ENCODE measurements at regions of chrX and their contacts with region 1.

Region 1: DNA sequence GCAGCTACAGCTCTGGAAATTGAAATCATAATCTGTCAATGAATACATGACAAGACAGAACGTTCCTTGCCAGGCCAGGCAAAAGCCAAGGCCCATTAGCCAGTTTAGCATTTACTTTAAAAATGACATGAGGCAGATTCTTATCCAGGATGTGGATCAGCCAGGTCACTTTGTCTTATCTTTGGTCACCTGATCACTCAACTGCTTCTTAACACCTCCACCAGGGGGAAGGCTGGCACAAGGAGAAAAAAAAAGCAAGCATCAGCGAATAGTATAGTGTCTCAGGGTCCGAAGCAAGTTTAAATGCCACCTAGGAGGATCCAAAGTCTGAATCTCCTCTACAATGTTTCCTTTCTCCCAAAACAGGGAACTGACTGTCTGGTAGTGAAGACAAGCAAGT is 18.8 kb downstream of the ATP1B4 start:
- DNase-seq: peak; percentile 28
- H3K4me3 ChIP-seq: no peak overlapping the region
- H3K27ac ChIP-seq: no peak overlapping the region
- H3K4me1 ChIP-seq: no peaks in the 10 kb centered on the region
- H3K27me3 ChIP-seq: no peaks in the 10 kb centered on the region
- CTCF ChIP-seq: peak; percentile 46 to 73

Region 2: DNA sequence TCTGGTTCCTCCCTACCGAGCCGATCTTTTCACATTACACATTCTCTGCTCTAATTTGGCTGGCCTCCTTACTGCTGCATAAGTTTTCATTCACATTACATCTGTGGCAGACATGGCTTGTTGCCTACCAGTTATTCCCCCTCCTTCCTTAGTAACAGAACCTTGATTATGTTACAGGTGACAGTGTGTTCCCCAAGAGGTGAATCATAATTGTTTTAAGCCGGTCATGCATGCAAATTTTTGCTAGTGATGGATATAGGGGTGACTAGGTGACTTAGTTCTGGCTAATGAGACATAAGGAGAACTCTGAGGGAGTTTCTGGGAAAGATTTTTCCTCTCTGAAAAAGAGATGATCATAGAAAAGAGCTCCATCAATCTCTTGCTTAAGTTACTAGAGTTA is 96.8 kb after region 1 on chrX:
- CTCF ChIA-PET with region 1: no interaction called
- dilution Hi-C with region 1: no loop called
- in situ Hi-C with region 1: no loop called
- intact Hi-C with region 1: loop called (anchors 1 kb)
- DNase-seq: peak; percentile 39
- H3K4me3 ChIP-seq: no peak overlapping the region
- H3K27ac ChIP-seq: no peak overlapping the region
- H3K4me1 ChIP-seq: no peaks in the 10 kb centered on the region
- H3K27me3 ChIP-seq: peaks cover 3% of the 10 kb centered on the region
- CTCF ChIP-seq: no peak

Region 3: DNA sequence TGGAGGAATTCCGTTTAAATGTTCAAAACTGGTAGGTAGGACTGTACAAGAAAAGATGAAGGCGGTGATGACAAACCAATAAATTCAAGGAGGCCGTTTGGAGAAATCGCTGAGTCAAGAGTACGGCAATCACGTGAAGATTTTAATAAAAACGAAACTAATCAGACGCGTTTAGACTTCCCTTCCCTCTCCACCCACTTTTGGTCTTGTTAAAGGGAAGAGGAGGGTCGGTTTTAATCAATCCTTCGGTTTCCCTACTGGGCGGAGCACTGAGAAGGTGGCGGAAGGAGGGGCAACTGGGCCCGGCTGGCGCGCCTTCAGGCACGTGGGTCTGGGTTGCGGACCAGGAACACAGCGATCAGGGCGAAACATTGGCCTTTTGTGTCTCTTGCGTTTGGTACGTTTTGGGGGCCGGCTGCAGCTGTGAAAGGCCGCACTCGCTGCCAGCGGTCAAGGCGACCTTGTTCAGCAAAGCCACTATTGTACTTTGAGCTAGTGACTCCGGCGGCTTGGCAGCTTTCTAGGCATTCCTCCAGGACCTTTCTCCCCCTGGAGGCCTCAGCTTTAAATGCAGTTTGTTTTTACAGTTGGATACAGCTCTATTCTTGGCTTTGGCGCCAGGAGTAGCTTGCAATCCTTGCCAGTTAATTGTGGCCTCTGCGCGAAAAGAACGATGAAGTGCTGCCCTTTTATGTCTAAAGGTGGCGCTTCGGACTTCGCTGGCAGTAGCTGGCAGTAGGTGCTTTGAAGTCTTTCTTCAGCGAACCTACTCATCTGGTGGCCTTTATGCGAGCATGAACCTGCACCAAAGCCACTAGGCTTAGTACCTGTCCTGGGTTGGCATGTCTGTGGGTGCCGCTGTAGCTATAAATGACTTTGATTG is 105.2 kb after region 1 on chrX:
- CTCF ChIA-PET with region 1: interaction called, 4 read pairs
- dilution Hi-C with region 1: no loop called
- in situ Hi-C with region 1: loop called in 1 of 2 experiments (anchors 5 kb)
- intact Hi-C with region 1: loop called (anchors 1 kb)
- DNase-seq: peak; percentile 76
- H3K4me3 ChIP-seq: peak overlapping the region; percentile 42 to 51 (median 47)
- H3K27ac ChIP-seq: peak overlapping the region; percentile 51
- H3K4me1 ChIP-seq: peaks cover 5% of the 10 kb centered on the region
- H3K27me3 ChIP-seq: peaks cover 3% of the 10 kb centered on the region
- CTCF ChIP-seq: peak; percentile 40 to 57

Measured in mammary epithelial cell (primary cell).